Naive thymus-derived CD8-positive, alpha-beta T cell (primary cell): ENCODE measurements at regions of chr1 and their contacts with region 1.

Region 1: GRCh38 chr1:21324368-21325141 is 34.3 kb upstream of the ECE1 start:
- DNase-seq: peak in 7 of 10 donors; percentile 28 to 72 (median 41)
- ATAC-seq: peak; percentile 74 to 80
- H3K4me3 Mint-ChIP-seq: peak overlapping the region; percentile 69 to 89 (median 82)
- H3K27ac Mint-ChIP-seq: peak overlapping the region; percentile 85 to 97 (median 96)
- H3K4me1 Mint-ChIP-seq: peaks cover 47 to 92% (median 85%) of the 10 kb centered on the region in 4 donors
- H3K27me3 Mint-ChIP-seq: no peaks in the 10 kb centered on the region

Region 2: DNA sequence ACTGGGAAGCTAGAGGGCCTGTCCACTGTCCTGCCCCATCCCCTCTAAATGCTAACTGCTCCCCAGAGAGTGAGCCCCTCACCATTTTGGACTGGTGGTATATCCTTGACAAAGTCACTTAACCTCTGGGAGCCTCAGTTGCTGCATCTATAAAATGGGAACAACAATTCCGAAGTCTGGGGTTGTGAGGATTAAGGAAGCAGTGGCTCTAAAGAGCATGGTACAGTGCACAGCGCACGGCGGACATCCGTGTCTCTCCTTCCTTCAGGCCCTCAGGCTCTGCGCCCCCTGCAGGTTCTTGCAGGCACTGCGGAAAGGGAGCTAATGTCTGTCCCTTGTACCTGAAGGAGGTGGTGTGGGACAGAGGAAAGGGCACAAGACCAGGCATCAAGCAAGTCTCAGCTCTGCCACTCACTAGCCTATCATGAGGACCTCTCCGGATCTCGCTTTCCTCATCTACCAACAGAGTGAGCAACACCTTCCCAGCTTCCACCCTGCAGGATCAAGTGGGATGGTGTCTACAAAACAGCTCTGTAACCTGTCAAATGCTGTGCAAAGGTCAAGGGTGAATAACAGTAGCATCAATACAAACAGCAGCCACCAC is 54.4 kb before region 1 on chr1:
- POLR2A ChIA-PET with region 1: interaction called, 10 read pairs
- DNase-seq: peak; percentile 65 to 90 (median 78)
- ATAC-seq: peak; percentile 84 to 98
- H3K4me3 Mint-ChIP-seq: no peak overlapping the region
- H3K27ac Mint-ChIP-seq: peak overlapping the region in 7 of 10 donors; percentile 20 to 67 (median 33)
- H3K4me1 Mint-ChIP-seq: peaks cover 9 to 29% (median 15%) of the 10 kb centered on the region in 4 donors
- H3K27me3 Mint-ChIP-seq: no peaks in the 10 kb centered on the region

Region 3: DNA sequence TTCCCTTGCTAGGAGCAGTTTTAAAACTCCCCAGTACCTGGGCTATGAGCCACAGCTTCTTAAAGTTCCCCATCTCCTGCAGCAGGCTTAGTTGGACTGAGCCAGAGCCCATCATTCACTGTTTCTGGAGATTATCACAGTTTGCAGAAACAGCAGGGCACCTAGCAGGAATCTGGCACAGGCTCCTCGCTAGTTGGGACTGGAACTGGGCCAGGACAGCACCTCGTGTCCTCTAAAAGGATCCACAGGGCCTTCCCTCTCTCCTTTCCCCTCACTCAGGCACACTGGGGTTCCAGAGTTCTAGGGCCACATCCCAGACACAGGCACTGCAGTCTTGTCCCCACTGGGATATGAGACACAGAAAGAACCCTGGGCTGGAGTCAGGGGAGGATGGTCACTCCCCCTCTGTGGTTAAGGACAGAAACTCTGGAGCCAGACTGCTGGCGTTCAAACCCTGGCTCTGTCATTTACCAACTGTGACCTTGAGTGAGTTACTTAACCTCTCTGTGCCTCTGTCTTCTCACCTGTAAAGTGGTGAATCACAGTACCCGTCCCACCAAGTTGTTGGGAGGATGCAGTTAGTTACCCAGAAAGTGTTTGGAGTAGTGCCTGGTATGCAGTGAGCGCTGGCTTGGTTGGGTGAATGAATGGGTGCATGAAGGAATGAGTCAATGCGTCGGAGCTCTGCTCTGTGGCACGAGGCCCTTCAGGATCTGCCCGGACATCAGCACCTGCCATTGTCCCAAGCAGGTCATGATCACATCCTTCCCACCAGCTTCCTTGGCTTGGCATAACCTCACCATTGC is 15.5 kb before region 1 on chr1:
- POLR2A ChIA-PET with region 1: interaction called, 17 read pairs
- DNase-seq: no peak
- ATAC-seq: no peak
- H3K4me3 Mint-ChIP-seq: peak overlapping the region in 1 of 10 donors; percentile 24
- H3K27ac Mint-ChIP-seq: peak overlapping the region in 5 of 10 donors; percentile 49 to 72 (median 61)
- H3K4me1 Mint-ChIP-seq: peaks cover 24 to 68% (median 45%) of the 10 kb centered on the region in 4 donors
- H3K27me3 Mint-ChIP-seq: no peaks in the 10 kb centered on the region